Transverse colon (tissue), 4 donors: ENCODE measurements at regions of chr13 and their contacts with region 1.

Region 1: DNA sequence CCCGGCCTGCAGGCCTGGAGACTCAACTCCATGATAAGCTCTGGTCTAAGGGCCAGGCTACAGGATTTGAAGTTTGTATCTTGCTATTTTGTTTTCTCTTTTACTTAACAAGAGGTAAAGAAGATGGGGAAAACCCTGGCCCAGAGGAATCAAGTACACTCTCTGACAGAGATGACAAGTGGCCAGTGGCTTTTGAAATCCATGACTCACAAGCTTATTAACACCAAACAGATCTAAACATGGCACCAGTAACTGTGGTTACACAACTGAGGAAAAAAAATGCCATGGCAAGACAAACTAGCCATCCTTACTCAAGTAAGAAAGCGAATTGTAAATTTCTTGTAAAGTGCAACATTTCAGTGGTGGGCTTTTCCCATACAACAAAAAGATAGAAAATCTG is 72.6 kb upstream of the SERTM1 start:
- DNase-seq: no peak
- H3K4me3 ChIP-seq: no peak overlapping the region
- H3K27ac ChIP-seq: no peak overlapping the region
- H3K4me1 ChIP-seq: no peaks in the 10 kb centered on the region
- H3K27me3 ChIP-seq: no peaks in the 10 kb centered on the region
- CTCF ChIP-seq: no peak
- EP300 ChIP-seq: no peak
- POLR2A ChIP-seq: no peak

Region 2: GRCh38 chr13:36096461-36097416 is 504.4 kb before region 1 on chr13:
- in situ Hi-C with region 1: no loop called
- intact Hi-C with region 1: loop called (anchors 10 kb)
- DNase-seq: no peak
- H3K4me3 ChIP-seq: no peak overlapping the region
- H3K27ac ChIP-seq: no peak overlapping the region
- H3K4me1 ChIP-seq: no peaks in the 10 kb centered on the region
- H3K27me3 ChIP-seq: no peaks in the 10 kb centered on the region
- CTCF ChIP-seq: no peak
- EP300 ChIP-seq: no peak
- POLR2A ChIP-seq: no peak

Region 3: DNA sequence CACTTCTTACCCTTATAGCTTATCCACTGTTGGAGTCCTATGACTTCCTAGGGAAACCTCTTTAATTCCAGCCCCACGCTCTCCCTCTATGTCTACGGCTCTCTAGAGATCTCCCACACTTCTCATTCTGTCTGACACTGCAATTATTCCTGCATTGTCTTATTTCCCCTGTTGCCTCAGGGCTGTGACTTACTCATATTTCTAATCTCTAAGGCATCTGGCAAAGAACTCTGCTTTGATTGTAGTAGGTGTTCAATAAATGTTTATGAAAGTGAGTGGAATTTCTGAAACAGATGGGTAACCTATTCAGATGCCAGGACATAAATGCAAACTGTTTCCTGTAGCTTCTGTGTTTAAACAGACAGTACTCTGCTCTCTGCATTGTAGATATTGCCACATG is 29.7 kb before region 1 on chr13:
- in situ Hi-C with region 1: no loop called
- intact Hi-C with region 1: loop called (anchors 1 kb)
- DNase-seq: no peak
- H3K4me3 ChIP-seq: no peak overlapping the region
- H3K27ac ChIP-seq: no peak overlapping the region
- H3K4me1 ChIP-seq: no peaks in the 10 kb centered on the region
- H3K27me3 ChIP-seq: no peaks in the 10 kb centered on the region
- CTCF ChIP-seq: no peak
- EP300 ChIP-seq: no peak
- POLR2A ChIP-seq: no peak